Stomach (tissue), 19 donors: ENCODE measurements at regions of chrX and their contacts with region 1.

Region 1: GRCh38 chrX:132615391-132616131 is 126.7 kb upstream of the MBNL3 start:
- DNase-seq: peak; percentile 48 to 65
- H3K4me3 ChIP-seq: no peak overlapping the region
- H3K27ac ChIP-seq: no peak overlapping the region
- H3K4me1 ChIP-seq: no peaks in the 10 kb centered on the region
- H3K27me3 ChIP-seq: peaks cover 0 to 6% (median 0%) of the 10 kb centered on the region in 3 donors
- CTCF ChIP-seq: peak in 3 of 7 experiments; percentile 16 to 45 (median 20)
- EP300 ChIP-seq: no peak
- POLR2A ChIP-seq: no peak

Region 2: GRCh38 chrX:132292793-132293192 is 322.8 kb before region 1 on chrX:
- intact Hi-C with region 1: loop called (anchors 10 kb)
- DNase-seq: peak in 1 of 2 donors; percentile 83
- H3K4me3 ChIP-seq: no peak overlapping the region
- H3K27ac ChIP-seq: no peak overlapping the region
- H3K4me1 ChIP-seq: peaks cover 0 to 4% (median 0%) of the 10 kb centered on the region in 4 donors
- H3K27me3 ChIP-seq: no peaks in the 10 kb centered on the region
- CTCF ChIP-seq: peak in 5 of 7 experiments; percentile 20 to 64 (median 43)
- EP300 ChIP-seq: no peak
- POLR2A ChIP-seq: no peak

Region 3: DNA sequence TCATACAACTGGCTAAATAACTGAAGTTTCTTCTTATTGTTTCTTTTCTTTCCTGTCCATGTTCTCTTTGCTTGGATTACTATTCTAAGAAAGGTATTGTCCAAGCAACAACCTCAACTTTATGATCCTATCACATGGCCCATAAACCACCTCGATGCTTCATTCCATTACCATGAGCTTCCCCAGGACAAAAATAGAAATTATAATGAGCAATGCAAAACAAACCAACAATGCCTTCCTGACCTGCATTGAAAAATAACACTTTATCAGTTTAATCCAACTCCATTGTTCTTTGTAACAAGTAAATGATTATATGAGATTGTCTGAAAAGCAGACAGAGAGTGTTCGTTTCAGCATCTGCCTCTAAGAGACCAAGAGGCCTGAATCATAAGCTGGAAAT is 194.0 kb after region 1 on chrX:
- intact Hi-C with region 1: no loop called
- DNase-seq: no peak
- H3K4me3 ChIP-seq: no peak overlapping the region
- H3K27ac ChIP-seq: no peak overlapping the region
- H3K4me1 ChIP-seq: no peaks in the 10 kb centered on the region
- H3K27me3 ChIP-seq: no peaks in the 10 kb centered on the region
- CTCF ChIP-seq: no peak
- EP300 ChIP-seq: no peak
- POLR2A ChIP-seq: no peak

Region 4: DNA sequence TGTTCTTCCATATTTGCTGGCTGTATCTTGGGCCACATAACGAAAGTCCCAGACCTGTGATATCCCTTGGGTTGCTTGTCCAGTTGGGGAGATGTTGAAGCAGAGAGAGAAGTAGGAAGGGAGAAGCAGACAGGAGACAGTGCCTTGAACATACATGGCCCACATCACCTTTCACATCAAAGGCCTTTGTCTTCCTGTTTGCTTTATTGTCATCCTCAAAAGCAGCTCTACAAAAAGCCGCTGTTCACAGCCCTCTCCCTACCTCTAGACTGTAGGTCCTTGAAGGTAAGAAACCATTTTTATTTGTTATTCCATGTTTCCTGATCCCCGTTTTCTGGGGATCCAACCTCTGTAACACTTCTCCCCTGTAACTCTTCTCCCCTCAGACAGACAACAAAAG is 466.4 kb after region 1 on chrX:
- intact Hi-C with region 1: no loop called
- DNase-seq: no peak
- H3K4me3 ChIP-seq: no peak overlapping the region
- H3K27ac ChIP-seq: no peak overlapping the region
- H3K4me1 ChIP-seq: no peaks in the 10 kb centered on the region
- H3K27me3 ChIP-seq: peaks cover 0 to 4% (median 4%) of the 10 kb centered on the region in 3 donors
- CTCF ChIP-seq: no peak
- EP300 ChIP-seq: no peak
- POLR2A ChIP-seq: no peak